Left cardiac atrium (tissue), 4 donors: ENCODE measurements at regions of chr9 and their contacts with region 1.

Region 1: GRCh38 chr9:76302947-76303940 is 91.0 kb downstream of the RFK start:
- DNase-seq: no peak
- ATAC-seq: peak; percentile 23 to 46

Region 2: GRCh38 chr9:75200892-75201470 is 1102.3 kb before region 1 on chr9:
- intact Hi-C with region 1: loop called (anchors 10 kb)
- DNase-seq: no peak
- ATAC-seq: no peak

Region 3: GRCh38 chr9:75890472-75891276 is 412.6 kb before region 1 on chr9 and contains the start of gene PCSK5:
- intact Hi-C with region 1: loop called in 1 of 2 experiments (anchors 5 kb)
- DNase-seq: peak; percentile 91
- ATAC-seq: peak; percentile 95 to 97
- total RNA-seq, gene PCSK5: 7.9 to 9.3 TPM

Region 4: GRCh38 chr9:76216161-76216649 is 87.0 kb before region 1 on chr9:
- intact Hi-C with region 1: loop called in 1 of 2 experiments (anchors 5 kb)
- DNase-seq: no peak
- ATAC-seq: peak in 1 of 2 donors; percentile 70